ENCODE measurements at regions of chr5 and their contacts with region 1.

Region 1: DNA sequence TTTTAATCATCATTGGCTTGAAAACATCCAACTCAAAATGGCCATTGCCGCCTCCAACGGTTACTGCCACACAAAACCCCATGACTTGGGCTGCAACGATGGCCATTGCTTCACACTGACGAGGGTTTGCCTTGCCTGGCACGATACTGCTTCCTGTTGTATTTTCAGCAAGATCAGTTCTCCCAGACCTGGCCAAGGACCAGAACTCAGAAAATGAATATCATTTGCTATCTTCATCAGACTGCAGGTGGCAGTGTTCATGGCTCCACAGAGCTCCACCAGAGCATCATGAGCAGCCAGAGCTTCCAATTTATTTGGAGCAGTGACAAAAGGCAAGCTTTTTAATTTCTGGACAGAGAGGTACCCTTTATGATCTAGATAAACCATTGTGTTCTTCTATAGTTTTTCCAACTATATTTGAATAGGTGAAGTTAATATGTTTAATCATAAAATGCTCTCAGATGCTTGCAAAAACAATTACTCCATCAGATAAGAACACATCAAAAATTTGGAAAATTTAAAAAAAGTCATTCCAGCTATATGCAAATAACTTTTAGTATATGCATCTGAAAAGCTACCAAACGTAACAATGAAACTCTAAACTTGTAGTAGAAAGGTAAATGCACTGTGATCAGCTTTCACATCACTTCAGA is 10.4 kb downstream of the AMACR start:
- DNase-seq: peak; percentile 33
- H3K4me3 Mint-ChIP-seq: no peak overlapping the region
- H3K27ac Mint-ChIP-seq: no peak overlapping the region
- H3K4me1 Mint-ChIP-seq: peaks cover 12% of the 10 kb centered on the region
- H3K27me3 Mint-ChIP-seq: no peaks in the 10 kb centered on the region

Region 2: GRCh38 chr5:33969572-33970452 is 27.6 kb before region 1 on chr5:
- CTCF ChIA-PET with region 1: interaction called, 13 read pairs
- POLR2A ChIA-PET with region 1: no interaction called
- intact Hi-C with region 1: no loop called
- DNase-seq: no peak
- H3K4me3 Mint-ChIP-seq: no peak overlapping the region
- H3K27ac Mint-ChIP-seq: no peak overlapping the region
- H3K4me1 Mint-ChIP-seq: peaks cover 14% of the 10 kb centered on the region
- H3K27me3 Mint-ChIP-seq: no peaks in the 10 kb centered on the region

Region 3: DNA sequence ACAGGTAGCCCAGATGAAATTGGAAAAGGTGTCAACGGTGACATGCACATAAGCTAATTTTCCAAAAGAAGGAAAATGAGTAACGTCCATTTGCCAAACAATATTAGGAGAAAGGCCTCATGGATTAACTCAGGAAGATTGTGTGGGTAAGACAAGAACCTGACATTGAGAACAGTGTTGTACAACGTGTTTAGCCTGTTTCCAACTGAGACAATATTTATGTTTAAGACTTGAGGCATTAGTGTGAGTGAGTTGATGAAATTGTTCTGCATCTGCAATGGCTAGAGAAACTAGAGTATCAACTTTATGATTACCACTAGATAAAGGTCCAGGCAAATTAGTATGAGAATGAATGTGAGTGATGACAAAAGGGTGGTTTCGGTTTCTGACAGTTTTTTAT is 467.4 kb after region 1 on chr5:
- CTCF ChIA-PET with region 1: interaction called, 15 read pairs
- POLR2A ChIA-PET with region 1: no interaction called
- intact Hi-C with region 1: loop called (anchors 1 kb)
- DNase-seq: no peak
- H3K4me3 Mint-ChIP-seq: no peak overlapping the region
- H3K27ac Mint-ChIP-seq: no peak overlapping the region
- H3K4me1 Mint-ChIP-seq: peaks cover 4% of the 10 kb centered on the region
- H3K27me3 Mint-ChIP-seq: peaks cover 16% of the 10 kb centered on the region

Measured in activated CD4-positive, alpha-beta memory T cell treated with anti-CD3 and anti-CD28 coated beads for 36 hours (primary cell).